ENCODE measurements at regions of chr7 and their contacts with region 1.

Region 1: DNA sequence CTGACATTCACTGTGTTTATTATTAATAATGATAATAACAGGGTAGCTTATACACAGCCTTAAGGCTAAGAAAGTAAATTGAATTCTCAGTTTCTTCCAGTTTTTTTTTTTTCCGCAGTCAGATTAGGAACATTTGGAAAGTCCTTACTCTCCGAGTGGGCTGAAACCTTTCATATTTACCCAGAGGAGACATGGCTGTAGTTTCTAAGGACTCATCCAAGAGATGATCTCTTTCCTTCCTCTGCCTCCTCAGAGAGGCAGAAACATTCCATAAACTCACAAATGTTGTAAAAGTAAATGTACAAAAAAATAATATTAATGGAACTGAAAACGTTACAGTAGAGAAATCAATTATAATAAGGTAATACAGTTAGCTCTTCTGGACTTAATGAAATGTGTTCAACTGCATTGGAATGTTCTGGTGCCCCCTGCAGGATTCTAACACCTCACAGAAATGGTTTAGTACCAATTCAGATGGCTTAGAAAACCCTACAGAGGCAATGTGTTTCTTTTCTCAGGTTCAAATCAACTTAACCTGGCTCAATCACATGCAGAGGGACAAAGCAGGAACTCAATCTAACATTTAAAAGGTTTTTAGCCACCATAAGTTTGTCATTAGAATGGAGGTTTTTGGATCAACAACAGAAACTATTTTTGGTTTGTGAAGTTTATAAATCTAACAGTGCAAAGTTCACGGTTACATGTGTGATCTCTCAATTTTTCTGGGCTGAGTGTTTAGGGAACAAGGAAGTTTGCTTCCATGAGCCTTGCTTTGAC is 71.7 kb downstream of the ICA1 start:
- DNase-seq: peak; percentile 84
- H3K4me3 Mint-ChIP-seq: no peak overlapping the region
- H3K27ac Mint-ChIP-seq: no peak overlapping the region
- H3K4me1 Mint-ChIP-seq: peaks cover 10% of the 10 kb centered on the region
- H3K27me3 Mint-ChIP-seq: no peaks in the 10 kb centered on the region

Region 2: GRCh38 chr7:7595451-7595850 is 594.9 kb before region 1 on chr7:
- CTCF ChIA-PET with region 1: no interaction called
- intact Hi-C with region 1: loop called (anchors 2 kb)
- DNase-seq: no peak
- H3K4me3 Mint-ChIP-seq: no peak overlapping the region
- H3K27ac Mint-ChIP-seq: no peak overlapping the region
- H3K4me1 Mint-ChIP-seq: peaks cover 3% of the 10 kb centered on the region
- H3K27me3 Mint-ChIP-seq: no peaks in the 10 kb centered on the region

Region 3: GRCh38 chr7:7614018-7614741 is 576.1 kb before region 1 on chr7:
- CTCF ChIA-PET with region 1: no interaction called
- intact Hi-C with region 1: no loop called
- DNase-seq: no peak
- H3K4me3 Mint-ChIP-seq: no peak overlapping the region
- H3K27ac Mint-ChIP-seq: no peak overlapping the region
- H3K4me1 Mint-ChIP-seq: peaks cover 24% of the 10 kb centered on the region
- H3K27me3 Mint-ChIP-seq: no peaks in the 10 kb centered on the region

Region 4: DNA sequence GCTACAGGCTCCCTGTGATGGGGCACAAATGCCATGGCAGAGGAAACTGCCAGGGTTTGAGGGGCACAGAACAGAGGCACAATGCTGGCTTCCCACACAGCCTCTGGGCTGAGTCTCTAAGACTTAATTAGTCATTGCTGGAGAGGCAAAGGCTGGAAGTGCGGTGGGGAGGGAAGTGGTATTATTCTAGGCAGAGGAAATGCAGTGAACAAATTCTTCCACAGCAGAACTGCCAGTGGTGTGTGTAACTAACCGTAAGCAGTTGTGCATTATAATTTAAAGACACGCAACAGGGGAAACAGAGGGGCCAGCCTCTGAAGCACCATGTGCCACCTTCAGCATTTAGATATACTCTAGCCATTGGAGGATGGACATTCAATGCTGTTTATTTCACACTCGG is 58.8 kb after region 1 on chr7:
- CTCF ChIA-PET with region 1: no interaction called
- intact Hi-C with region 1: no loop called
- DNase-seq: no peak
- H3K4me3 Mint-ChIP-seq: no peak overlapping the region
- H3K27ac Mint-ChIP-seq: no peak overlapping the region
- H3K4me1 Mint-ChIP-seq: no peaks in the 10 kb centered on the region
- H3K27me3 Mint-ChIP-seq: peaks cover under 1% of the 10 kb centered on the region

Region 5: GRCh38 chr7:8274589-8274988 is 84.3 kb after region 1 on chr7:
- CTCF ChIA-PET with region 1: no interaction called
- intact Hi-C with region 1: no loop called
- DNase-seq: no peak
- H3K4me3 Mint-ChIP-seq: no peak overlapping the region
- H3K27ac Mint-ChIP-seq: no peak overlapping the region
- H3K4me1 Mint-ChIP-seq: no peaks in the 10 kb centered on the region
- H3K27me3 Mint-ChIP-seq: peaks cover 10% of the 10 kb centered on the region

Measured in activated naive CD4-positive, alpha-beta T cell treated with anti-CD3 and anti-CD28 coated beads for 36 hours (primary cell).